H1 (cell line): ENCODE measurements at regions of chr2 and their contacts with region 1.

Region 1: DNA sequence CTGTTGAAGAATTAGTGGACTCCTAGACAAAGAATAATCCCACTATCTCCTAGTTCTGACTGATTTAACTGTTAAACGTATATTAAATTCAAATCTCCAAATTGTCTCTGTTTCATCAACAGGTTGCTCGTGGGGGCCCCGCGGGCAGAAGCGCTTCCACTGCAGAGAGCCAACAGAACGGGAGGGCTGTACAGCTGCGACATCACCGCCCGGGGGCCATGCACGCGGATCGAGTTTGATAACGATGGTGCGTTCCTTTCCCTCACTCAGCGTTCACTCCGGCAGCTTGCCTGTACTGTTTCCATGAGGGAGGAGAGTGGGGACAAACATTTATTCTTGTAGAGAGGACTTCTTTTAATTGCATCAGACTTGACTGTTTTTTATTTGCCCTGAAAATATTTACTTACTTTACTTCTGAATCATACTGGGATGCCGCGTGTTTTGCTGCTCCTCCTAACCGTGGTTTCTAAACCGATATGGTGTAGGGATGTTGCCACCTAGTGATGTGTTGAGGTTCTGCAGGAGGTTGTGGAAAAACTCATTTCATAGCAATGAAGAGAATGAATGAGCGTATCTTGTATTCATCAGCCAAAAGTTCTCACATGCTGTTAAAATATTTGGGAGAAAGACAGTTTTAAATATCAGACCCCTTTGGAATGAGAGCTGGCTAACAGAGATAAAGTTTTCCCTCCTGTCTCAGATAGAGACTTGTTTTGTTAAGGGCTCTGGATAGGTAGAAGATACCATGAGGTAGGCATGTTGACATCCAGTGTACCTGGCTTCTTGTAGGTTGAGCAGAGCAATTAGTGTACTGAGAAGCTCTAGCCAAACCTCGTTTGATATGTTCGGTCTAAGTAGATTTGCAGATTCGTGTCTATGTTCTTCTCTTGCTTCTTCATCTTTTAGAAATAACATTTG is 38.3 kb downstream of the ITGA6 start:
- DNase-seq: peak in 1 of 2 experiments; percentile 73
- H3K4me3 ChIP-seq: no peak overlapping the region
- H3K27ac ChIP-seq: no peak overlapping the region
- H3K4me1 ChIP-seq: peaks cover 10 to 19% (median 11%) of the 10 kb centered on the region in 4 experiments; a peak in 6 of 7 replicates
- H3K27me3 ChIP-seq: no peaks in the 10 kb centered on the region
- CTCF ChIP-seq: peak; percentile 30 to 86 (median 67)
- EP300 ChIP-seq: no peak
- POLR2A ChIP-seq: no peak
- RAD21 ChIP-seq: peak; percentile 93 to 94

Region 2: DNA sequence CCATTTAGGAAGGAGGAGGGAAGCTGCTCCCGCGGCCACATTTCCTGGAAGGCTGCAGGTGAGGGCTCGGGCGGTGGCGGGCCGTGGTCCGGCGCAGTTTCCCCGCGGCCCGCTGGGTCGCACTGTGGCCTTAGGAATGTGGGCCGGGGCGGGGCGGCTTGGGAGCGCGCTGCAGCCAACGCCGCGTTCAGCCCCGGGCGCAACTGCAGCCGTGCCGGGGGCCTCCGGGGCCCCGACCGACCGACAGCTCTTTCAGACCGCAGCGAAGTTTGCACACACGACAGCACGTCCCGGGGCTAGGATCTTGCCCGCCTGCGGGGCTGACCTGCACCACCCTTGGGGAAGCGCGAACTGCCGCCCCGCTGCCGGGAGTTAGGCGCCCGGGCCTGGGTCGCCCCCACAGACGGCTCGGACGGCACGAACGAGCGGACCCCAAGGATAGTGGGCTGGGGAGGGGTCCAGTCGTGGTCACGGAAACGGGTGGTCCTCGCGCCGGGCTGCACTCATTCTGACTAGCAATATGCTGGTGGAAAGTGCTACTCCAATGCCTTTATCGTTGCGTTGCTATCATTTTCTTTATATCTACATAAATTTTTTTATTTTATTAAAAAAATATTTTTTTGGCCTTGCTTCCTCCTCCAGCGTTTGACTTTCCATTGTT is 293.0 kb before region 1 on chr2:
- CTCF ChIA-PET with region 1: interaction called, 206 read pairs
- POLR2A ChIA-PET with region 1: interaction called, 15 read pairs
- DNase-seq: peak; percentile 58 to 93
- H3K4me3 ChIP-seq: peak overlapping the region; percentile 35 to 66 (median 58)
- H3K27ac ChIP-seq: no peak overlapping the region
- H3K4me1 ChIP-seq: peaks cover 2 to 11% (median 9%) of the 10 kb centered on the region in 4 experiments; a peak in 5 of 7 replicates
- H3K27me3 ChIP-seq: peaks cover 0 to 2% (median 0%) of the 10 kb centered on the region in 4 experiments; a peak in 1 of 7 replicates
- CTCF ChIP-seq: peak; percentile 83 to 97 (median 84)
- EP300 ChIP-seq: 0 out of 3 replicates have a peak, but pooled peaks of 1 of the 2 experiments have one; percentile 22
- POLR2A ChIP-seq: peak in 1 of 2 experiments; percentile 51; a peak in 1 of 3 replicates
- RAD21 ChIP-seq: peak; percentile 97 to 99

Region 3: GRCh38 chr2:172215172-172215935 is 250.3 kb before region 1 on chr2:
- CTCF ChIA-PET with region 1: interaction called, 24 read pairs
- POLR2A ChIA-PET with region 1: no interaction called
- DNase-seq: no peak
- H3K4me3 ChIP-seq: no peak overlapping the region
- H3K27ac ChIP-seq: no peak overlapping the region
- H3K4me1 ChIP-seq: peaks cover 0 to 4% (median 2%) of the 10 kb centered on the region in 4 experiments; a peak in 3 of 7 replicates
- H3K27me3 ChIP-seq: no peaks in the 10 kb centered on the region
- CTCF ChIP-seq: no peak
- EP300 ChIP-seq: no peak
- POLR2A ChIP-seq: no peak
- RAD21 ChIP-seq: no peak

Region 4: DNA sequence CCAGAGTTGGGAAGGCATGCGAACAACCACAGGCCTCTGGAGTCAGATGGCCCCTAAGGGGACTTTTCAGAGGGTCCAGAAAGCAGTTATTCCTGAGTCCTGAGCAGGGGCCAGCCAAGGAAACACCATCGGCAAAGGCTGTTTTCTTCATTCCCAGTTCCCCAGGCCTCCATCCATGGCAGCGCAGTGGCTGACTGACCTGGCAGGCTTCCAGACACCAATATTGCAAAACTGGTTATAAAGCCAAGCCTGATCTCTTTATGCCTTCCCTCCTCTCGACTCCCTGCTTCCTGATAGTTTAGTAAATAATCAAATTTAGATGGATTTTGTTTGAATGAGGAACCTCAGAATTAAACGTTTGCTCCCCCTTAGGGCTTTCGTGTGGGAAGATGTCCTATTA is 171.7 kb before region 1 on chr2:
- CTCF ChIA-PET with region 1: interaction called, 10 read pairs
- POLR2A ChIA-PET with region 1: no interaction called
- DNase-seq: no peak
- H3K4me3 ChIP-seq: no peak overlapping the region
- H3K27ac ChIP-seq: no peak overlapping the region
- H3K4me1 ChIP-seq: peaks cover 3 to 13% (median 8%) of the 10 kb centered on the region in 4 experiments; a peak in 6 of 7 replicates
- H3K27me3 ChIP-seq: peaks cover 0 to 12% (median 4%) of the 10 kb centered on the region in 4 experiments; a peak in 4 of 7 replicates
- CTCF ChIP-seq: no peak
- EP300 ChIP-seq: no peak
- POLR2A ChIP-seq: no peak
- RAD21 ChIP-seq: no peak

Region 5: DNA sequence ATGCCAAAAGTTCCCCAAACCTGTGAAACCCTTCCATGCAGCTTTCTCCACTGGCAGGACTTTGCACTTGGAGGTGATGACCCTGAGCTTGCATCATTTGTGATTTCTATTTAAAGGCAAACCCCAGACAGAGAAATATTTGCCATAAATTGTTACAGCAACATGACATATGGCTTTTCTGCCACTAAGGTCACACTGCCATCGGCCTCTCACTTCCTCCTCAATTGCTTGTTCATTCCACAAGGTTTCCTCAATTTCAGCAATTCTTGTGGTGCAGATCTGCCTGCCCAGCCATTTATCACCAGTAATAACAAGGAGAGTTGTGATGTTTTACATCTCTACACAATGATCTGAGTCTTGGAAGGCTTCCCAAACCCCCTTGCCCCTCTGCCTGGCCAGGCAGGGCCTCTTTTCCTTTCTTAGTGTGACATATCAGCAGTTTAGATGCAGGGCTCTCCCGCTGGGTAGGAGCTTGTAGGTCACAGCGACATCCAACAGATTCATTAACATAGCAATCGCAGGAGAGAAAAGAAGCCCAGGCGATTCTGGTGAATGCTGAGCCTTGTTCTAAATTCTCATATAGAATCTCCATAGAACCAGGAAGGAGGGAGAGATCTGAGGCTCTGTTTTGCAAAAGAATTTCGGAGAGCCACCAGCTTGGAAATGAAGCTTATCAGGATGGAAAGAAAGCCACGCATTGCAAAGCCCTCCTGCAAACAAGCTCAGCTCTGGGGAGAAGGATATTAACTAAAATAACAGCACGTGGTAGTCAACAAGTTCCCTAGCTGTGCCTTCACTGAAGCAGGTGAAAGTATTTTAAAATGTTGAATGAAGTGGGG is 85.0 kb before region 1 on chr2:
- CTCF ChIA-PET with region 1: interaction called, 31 read pairs
- POLR2A ChIA-PET with region 1: interaction called, 12 read pairs
- DNase-seq: peak; percentile 72 to 88
- H3K4me3 ChIP-seq: peak overlapping the region in 3 of 4 experiments; percentile 18 to 46 (median 27); a peak in 5 of 8 replicates
- H3K27ac ChIP-seq: peak overlapping the region; percentile 97
- H3K4me1 ChIP-seq: peaks cover 15 to 24% (median 19%) of the 10 kb centered on the region in 4 experiments
- H3K27me3 ChIP-seq: no peaks in the 10 kb centered on the region; a peak in 3 of 7 replicates
- CTCF ChIP-seq: no peak
- EP300 ChIP-seq: peak in 1 of 2 experiments; percentile 73; a peak in 1 of 3 replicates
- POLR2A ChIP-seq: peak; percentile 40 to 52
- RAD21 ChIP-seq: peak; percentile 3 to 13; a peak in 3 of 4 replicates

Region 6: GRCh38 chr2:172452845-172453244 is 12.8 kb before region 1 on chr2:
- CTCF ChIA-PET with region 1: interaction called, 634 read pairs
- POLR2A ChIA-PET with region 1: interaction called, 15 read pairs
- DNase-seq: no peak
- H3K4me3 ChIP-seq: no peak overlapping the region
- H3K27ac ChIP-seq: no peak overlapping the region
- H3K4me1 ChIP-seq: peaks cover 11 to 39% (median 32%) of the 10 kb centered on the region in 4 experiments
- H3K27me3 ChIP-seq: no peaks in the 10 kb centered on the region
- CTCF ChIP-seq: no peak
- EP300 ChIP-seq: no peak
- POLR2A ChIP-seq: no peak
- RAD21 ChIP-seq: no peak

Region 7: GRCh38 chr2:172516299-172516698 is 50.6 kb after region 1 on chr2:
- CTCF ChIA-PET with region 1: no interaction called
- POLR2A ChIA-PET with region 1: no interaction called
- DNase-seq: no peak
- H3K4me3 ChIP-seq: no peak overlapping the region
- H3K27ac ChIP-seq: no peak overlapping the region
- H3K4me1 ChIP-seq: no peaks in the 10 kb centered on the region
- H3K27me3 ChIP-seq: no peaks in the 10 kb centered on the region
- CTCF ChIP-seq: no peak
- EP300 ChIP-seq: no peak
- POLR2A ChIP-seq: no peak
- RAD21 ChIP-seq: no peak

Region 8: GRCh38 chr2:172571245-172571644 is 105.6 kb after region 1 on chr2:
- CTCF ChIA-PET with region 1: no interaction called
- POLR2A ChIA-PET with region 1: no interaction called
- DNase-seq: no peak
- H3K4me3 ChIP-seq: no peak overlapping the region
- H3K27ac ChIP-seq: no peak overlapping the region
- H3K4me1 ChIP-seq: no peaks in the 10 kb centered on the region
- H3K27me3 ChIP-seq: no peaks in the 10 kb centered on the region
- CTCF ChIP-seq: no peak
- EP300 ChIP-seq: no peak
- POLR2A ChIP-seq: no peak
- RAD21 ChIP-seq: no peak